Transverse colon (tissue), 4 donors: ENCODE measurements at regions of chr12 and their contacts with region 1.

Region 1: GRCh38 chr12:94649349-94650142 is 811 bp downstream of the TMCC3 start:
- DNase-seq: peak; percentile 66
- H3K4me3 ChIP-seq: peak overlapping the region; percentile 34 to 85 (median 74)
- H3K27ac ChIP-seq: peak overlapping the region; percentile 71 to 87 (median 78)
- H3K4me1 ChIP-seq: peaks cover 0 to 14% (median 7%) of the 10 kb centered on the region in 4 donors
- H3K27me3 ChIP-seq: no peaks in the 10 kb centered on the region
- CTCF ChIP-seq: peak in 4 of 5 experiments; percentile 31 to 62 (median 52)
- EP300 ChIP-seq: no peak
- POLR2A ChIP-seq: no peak

Region 2: GRCh38 chr12:94262228-94263010 is 387.1 kb before region 1 on chr12:
- in situ Hi-C with region 1: no loop called
- intact Hi-C with region 1: no loop called
- DNase-seq: peak; percentile 81
- H3K4me3 ChIP-seq: peak overlapping the region; percentile 33 to 50 (median 44)
- H3K27ac ChIP-seq: peak overlapping the region; percentile 69 to 84 (median 78)
- H3K4me1 ChIP-seq: peaks cover 7 to 33% (median 12%) of the 10 kb centered on the region in 4 donors
- H3K27me3 ChIP-seq: no peaks in the 10 kb centered on the region
- CTCF ChIP-seq: peak in 1 of 5 experiments; percentile 32
- EP300 ChIP-seq: no peak
- POLR2A ChIP-seq: no peak

Region 3: GRCh38 chr12:94386422-94386821 is 263.1 kb before region 1 on chr12:
- in situ Hi-C with region 1: no loop called
- intact Hi-C with region 1: no loop called
- DNase-seq: no peak
- H3K4me3 ChIP-seq: no peak overlapping the region
- H3K27ac ChIP-seq: no peak overlapping the region
- H3K4me1 ChIP-seq: no peaks in the 10 kb centered on the region
- H3K27me3 ChIP-seq: no peaks in the 10 kb centered on the region
- CTCF ChIP-seq: no peak
- EP300 ChIP-seq: no peak
- POLR2A ChIP-seq: no peak

Region 4: DNA sequence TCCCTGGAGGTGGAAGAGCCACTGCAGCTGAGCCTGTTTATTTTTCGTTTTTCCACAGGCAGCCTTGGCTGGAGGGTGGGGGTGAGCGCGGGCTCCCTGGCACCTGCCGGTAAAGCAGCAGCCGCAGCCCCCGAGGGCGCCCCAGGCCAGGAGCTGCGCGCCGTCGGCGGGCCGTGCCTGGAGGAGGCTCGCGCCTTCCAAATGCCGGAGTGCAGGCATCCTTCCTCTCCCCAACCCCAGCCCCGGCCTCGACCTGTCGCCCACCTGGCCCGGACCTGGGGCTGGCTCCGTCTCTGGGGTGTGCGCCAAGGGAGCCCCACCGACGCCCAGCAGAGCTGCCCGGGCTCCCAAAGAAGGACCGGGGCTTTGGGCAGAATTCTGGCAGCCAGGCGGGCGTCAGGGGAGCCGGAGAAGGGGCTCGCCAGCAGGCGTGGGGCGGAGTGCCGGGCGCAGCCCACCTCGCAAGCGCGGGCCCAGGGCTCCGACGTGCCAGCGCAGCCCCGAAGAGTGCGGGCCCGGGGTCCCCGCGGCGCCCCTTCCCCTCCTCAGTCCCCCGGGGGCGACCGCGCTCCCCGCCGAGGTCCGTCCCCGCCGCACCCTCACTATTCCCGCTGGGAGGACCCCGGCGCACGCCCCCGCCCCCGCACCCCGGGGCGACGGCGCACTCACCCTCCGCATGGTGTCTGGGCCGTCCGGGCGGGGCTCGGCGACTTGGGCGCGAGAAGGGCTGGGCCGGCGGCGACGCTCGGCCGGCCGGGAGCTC is 223.6 kb after region 1 on chr12:
- in situ Hi-C with region 1: no loop called
- intact Hi-C with region 1: loop called (anchors 2 kb)
- DNase-seq: peak; percentile 42
- H3K4me3 ChIP-seq: peak overlapping the region; percentile 44 to 67 (median 54)
- H3K27ac ChIP-seq: peak overlapping the region in 1 of 4 donors; percentile 40
- H3K4me1 ChIP-seq: peaks cover 3 to 15% (median 14%) of the 10 kb centered on the region in 4 donors
- H3K27me3 ChIP-seq: peaks cover 59% of the 10 kb centered on the region
- CTCF ChIP-seq: no peak
- EP300 ChIP-seq: no peak
- POLR2A ChIP-seq: no peak